ENCODE measurements at regions of chr6 and their contacts with region 1.

Region 1: GRCh38 chr6:106444777-106445507 is 84.4 kb downstream of the CRYBG1 start:
- DNase-seq: no peak
- H3K4me3 ChIP-seq: no peak overlapping the region
- H3K27ac ChIP-seq: peak overlapping the region in 2 of 3 donors; percentile 5 to 67
- H3K4me1 ChIP-seq: peaks cover 0 to 12% of the 10 kb centered on the region in 2 donors
- H3K27me3 ChIP-seq: no peaks in the 10 kb centered on the region
- CTCF ChIP-seq: peak; percentile 38 to 79 (median 63)
- POLR2A ChIP-seq: no peak

Region 2: DNA sequence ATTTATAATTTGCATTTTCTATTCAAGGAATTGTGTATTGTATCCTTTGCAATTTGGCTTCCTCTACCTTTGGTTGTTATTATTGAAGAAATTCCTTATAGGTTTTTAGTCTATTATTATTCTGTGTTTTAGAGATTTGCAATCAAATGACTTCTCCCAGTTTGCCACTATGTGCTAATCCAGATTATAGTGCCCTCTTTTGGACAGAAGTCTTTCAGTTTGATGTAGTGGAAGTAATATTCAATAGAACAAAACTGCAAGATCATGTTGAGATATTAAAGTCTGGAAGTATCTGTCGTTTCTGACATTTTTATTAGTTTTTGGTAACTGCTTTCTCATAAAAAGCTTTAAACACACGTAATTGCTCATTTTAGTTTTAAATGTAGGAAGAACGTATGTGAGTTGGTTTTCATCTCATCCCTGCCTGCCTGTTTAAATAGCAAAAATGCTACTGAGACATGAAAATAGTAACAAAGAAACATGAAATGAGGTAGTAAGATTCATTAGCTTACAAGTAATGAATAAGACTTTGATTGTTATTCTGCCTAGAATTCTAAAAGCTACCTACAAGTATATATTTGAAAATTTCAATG is 111.5 kb after region 1 on chr6:
- intact Hi-C with region 1: no loop called
- DNase-seq: no peak
- H3K4me3 ChIP-seq: no peak overlapping the region
- H3K27ac ChIP-seq: no peak overlapping the region
- H3K4me1 ChIP-seq: peaks cover 2 to 5% of the 10 kb centered on the region in 2 donors
- H3K27me3 ChIP-seq: no peaks in the 10 kb centered on the region
- CTCF ChIP-seq: peak in 3 of 6 experiments; percentile 35 to 42 (median 38)
- POLR2A ChIP-seq: no peak

Region 3: DNA sequence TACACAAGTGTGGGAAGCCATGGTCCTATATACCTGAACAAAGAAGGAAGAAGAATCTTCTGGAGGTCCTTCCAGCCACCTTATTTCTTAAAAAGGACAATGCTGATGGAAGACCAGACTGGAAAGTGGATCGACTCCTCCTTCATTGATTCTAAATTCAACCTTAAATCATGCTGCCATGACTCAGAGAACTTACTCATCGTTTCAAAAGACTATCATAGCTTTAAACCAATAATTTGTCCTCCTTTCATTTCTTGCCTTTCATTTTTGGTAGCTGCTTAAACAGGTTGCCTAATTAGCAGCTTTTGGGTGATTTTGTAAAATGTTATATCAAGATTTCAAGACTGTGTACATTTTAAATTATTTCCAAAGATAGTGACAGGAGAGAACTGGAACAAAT is 123.6 kb after region 1 on chr6:
- intact Hi-C with region 1: loop called (anchors 5 kb)
- DNase-seq: no peak
- H3K4me3 ChIP-seq: no peak overlapping the region
- H3K27ac ChIP-seq: no peak overlapping the region
- H3K4me1 ChIP-seq: no peaks in the 10 kb centered on the region
- H3K27me3 ChIP-seq: no peaks in the 10 kb centered on the region
- CTCF ChIP-seq: no peak
- POLR2A ChIP-seq: no peak